Right ventricle myocardium superior (tissue), 1 donor: ENCODE measurements at regions of chr1 and their contacts with region 1.

Region 1: GRCh38 chr1:211578640-211579433 is at the start of gene SLC30A1:
- DNase-seq: peak; percentile 100
- ATAC-seq: peak; percentile 95
- total RNA-seq, gene SLC30A1: 9.8 TPM

Region 2: DNA sequence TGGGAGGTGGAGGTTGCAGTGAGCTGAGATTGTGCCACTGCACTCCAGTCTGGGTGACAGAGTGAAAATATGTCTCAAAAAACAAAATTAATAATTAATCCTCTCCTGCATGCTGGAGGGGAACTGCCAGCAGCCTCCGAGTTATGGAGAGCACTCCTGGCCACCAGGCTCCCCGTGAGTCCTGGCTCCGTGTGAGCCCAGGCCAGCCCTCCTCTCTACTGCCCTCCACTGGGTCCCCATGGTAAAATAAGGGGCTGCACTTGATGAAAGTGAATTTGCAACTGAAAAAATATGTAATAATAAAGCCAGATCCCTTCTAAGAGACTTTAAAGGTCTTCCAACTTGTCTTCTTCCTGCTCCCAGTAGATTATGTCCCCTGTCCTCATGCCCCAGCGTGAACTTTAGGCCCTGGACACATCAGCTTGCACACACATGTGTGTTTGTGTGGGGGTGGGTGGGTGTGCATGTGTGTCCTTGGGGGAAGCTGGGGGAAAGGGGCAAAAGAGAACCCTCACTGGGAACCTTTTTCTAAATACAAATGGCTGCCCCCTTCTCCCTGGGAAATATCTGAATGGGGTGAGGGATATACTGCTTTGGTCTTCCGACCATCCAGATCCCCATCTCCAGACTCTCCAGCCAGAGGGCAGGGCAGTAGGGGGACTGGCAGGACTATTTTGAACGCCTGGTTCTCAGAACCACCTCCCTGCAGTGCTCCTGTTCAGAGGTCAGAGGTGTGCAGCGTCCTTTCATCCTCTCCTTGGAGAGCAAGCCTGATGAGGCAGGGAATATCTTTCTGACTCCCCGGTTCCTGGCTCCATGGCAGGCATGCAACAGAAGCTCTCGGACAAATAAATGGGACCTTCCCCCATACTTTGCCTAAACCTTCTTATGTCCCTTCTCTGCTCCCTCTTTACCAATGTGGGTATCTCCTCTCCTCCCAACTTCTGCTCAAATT is 70.4 kb after region 1 on chr1:
- intact Hi-C with region 1: loop called (anchors 5 kb)
- DNase-seq: peak; percentile 70
- ATAC-seq: peak; percentile 89